ENCODE measurements at regions of chr7 and their contacts with region 1.

Region 1: DNA sequence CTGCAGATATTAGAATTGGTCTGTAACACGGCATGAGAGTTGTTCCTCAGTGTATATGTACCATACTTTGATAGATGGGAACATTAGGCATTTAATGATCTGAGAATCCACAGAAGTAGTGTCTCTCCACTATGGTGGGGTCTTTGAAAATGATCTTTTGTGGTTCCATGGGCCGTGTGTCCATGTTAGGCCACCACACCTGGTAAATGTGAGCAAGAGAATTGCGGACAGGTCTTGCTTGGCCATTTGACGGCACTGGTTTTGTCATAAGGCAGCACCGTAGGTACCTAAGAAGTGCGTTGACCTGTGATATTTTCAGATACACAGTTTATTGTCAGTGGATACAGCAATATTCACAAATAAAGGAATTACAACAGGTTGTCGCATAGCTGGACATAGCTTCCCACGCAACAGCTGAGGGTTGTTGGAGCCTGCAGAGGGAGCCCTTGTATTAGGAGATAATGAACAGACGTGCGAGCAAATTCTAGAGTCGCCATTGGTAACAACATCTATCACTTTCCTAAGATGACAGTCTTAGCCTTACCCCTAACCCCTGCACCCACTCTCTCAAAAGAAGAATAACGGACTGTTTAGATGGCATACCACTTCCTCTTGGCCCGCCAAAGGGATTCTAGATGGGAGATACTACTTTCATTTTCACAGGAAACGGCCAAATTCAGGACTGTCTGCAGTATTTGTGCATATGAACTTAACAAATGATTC is 111.4 kb downstream of the COL28A1 start:
- DNase-seq: peak; percentile 74
- ATAC-seq: peak; percentile 97
- H3K4me3 ChIP-seq: peak overlapping the region; percentile 36 to 66
- H3K27ac ChIP-seq: no peak overlapping the region
- H3K4me1 ChIP-seq: no peaks in the 10 kb centered on the region
- H3K27me3 ChIP-seq: peaks cover 9% of the 10 kb centered on the region
- CTCF ChIP-seq: peak; percentile 93

Region 2: DNA sequence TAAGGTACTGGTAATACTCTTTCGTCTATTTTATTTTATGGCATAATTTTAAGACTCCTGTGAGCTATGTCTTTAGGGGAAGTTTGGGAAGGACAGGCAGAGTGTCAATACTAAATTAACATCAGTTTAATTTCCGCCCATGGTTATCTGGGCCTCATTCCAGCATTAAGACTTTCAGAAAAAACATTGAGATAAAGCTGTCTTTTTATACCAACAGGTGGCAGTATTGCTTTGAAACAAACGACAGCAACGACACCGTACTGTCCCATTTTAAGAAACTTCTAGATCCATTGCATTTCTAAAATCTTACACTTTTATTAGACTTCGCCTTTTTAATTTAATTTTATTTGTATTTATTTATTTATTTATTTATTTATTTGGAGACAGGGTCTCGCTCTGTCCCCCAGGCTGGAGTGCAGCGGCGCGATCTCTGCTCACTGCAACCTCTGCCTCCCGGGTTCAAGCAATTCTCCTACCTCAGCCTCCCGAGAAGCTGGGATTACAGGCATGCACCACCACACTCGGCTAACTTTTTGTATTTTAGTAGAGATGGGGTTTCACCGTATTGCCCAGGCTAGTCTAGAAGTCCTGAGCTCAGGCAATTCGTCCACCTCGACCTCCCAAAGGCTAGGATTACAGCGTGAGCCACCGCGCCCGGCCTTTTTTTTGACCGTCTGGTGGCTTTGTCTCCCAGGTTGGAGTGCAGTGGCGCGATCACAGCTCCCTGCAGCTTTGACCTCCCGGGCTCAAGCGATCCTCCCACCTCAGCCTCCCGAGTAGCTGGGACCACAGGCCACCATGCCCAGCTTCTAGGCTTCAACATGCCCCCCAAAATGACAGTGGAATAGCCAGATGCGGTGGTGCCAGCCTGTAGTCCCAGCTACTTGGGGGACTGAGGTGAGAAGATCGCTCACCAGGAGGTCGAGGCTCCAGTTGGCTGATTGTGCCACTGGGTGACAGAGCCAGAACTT is 320.7 kb before region 1 on chr7:
- CTCF ChIA-PET with region 1: interaction called, 3 read pairs
- POLR2A ChIA-PET with region 1: no interaction called
- in situ Hi-C with region 1: no loop called
- intact Hi-C with region 1: loop called (anchors 5 kb)
- DNase-seq: peak; percentile 50
- ATAC-seq: peak; percentile 84
- H3K4me3 ChIP-seq: peak overlapping the region in 1 of 2 experiments; percentile 44; a peak in 2 of 4 replicates
- H3K27ac ChIP-seq: no peak overlapping the region; the same call in 1 of the 2 replicates
- H3K4me1 ChIP-seq: peaks cover 5% of the 10 kb centered on the region
- H3K27me3 ChIP-seq: 0 out of 2 replicates have a peak, but pooled peaks cover 3% of the 10 kb centered on the region
- CTCF ChIP-seq: peak; percentile 77

Region 3: DNA sequence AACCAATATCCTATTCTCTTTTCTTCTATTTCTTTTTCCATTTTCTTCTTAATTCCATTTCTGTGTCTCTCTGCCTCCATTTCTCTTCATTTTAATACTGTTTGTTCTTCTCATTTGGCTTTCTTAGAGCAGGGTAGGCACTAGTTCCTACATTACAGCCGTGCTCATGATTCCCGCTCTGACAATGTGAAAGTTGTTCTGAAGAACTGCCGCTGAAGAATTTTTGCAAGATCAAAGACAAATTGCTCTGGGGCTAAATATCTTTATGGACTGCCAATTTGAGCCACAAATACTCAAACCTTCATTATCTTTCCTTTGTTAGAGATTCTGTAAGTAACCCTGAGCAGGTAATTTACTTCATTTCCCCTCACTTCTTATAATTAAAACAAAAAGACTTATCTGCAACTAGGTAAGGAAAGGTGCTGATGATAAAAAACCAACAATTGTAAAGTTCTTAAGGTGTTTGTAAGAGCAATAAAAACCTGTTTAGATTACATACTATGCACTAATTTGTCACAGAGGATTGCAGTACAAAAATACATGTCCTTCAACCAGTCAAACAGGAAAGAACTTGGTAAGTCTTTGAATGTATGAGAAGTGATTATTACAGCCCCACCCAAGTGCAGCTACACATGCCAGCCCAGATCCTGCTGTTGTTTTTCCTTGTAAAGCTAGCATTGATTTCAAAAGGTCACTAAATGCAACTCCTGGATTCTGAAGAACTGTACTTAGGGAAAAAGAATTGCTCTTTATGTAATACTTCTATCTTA is 16.1 kb before region 1 on chr7:
- CTCF ChIA-PET with region 1: no interaction called
- POLR2A ChIA-PET with region 1: no interaction called
- in situ Hi-C with region 1: no loop called
- intact Hi-C with region 1: no loop called
- DNase-seq: no peak
- ATAC-seq: no peak
- H3K4me3 ChIP-seq: no peak overlapping the region
- H3K27ac ChIP-seq: no peak overlapping the region
- H3K4me1 ChIP-seq: no peaks in the 10 kb centered on the region
- H3K27me3 ChIP-seq: no peaks in the 10 kb centered on the region; the same call in 1 of the 2 replicates
- CTCF ChIP-seq: no peak

Region 4: DNA sequence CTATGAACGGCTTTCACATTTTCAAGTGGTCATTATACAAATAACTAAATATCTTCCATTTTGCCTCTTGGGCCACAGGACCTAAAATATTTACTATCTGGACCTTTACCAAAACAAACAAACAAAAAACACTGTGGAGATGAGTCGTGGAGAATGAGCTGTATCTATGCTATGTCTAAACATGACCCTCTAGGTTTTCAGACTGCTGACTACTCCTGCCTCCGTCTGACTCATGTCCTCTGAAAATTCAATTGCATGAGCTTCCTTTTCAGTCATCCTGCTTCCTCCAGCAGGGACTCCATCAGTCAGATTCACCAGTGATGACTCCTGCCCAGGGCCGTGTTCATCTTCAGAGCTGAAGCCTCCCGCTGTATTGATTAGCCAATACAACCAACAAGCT is 14.5 kb after region 1 on chr7:
- CTCF ChIA-PET with region 1: no interaction called
- POLR2A ChIA-PET with region 1: no interaction called
- in situ Hi-C with region 1: no loop called
- intact Hi-C with region 1: no loop called
- DNase-seq: peak; percentile 95
- ATAC-seq: peak; percentile 89
- H3K4me3 ChIP-seq: no peak overlapping the region
- H3K27ac ChIP-seq: no peak overlapping the region
- H3K4me1 ChIP-seq: no peaks in the 10 kb centered on the region
- H3K27me3 ChIP-seq: no peaks in the 10 kb centered on the region
- CTCF ChIP-seq: no peak

Region 5: GRCh38 chr7:7474431-7474830 is 50.1 kb after region 1 on chr7:
- CTCF ChIA-PET with region 1: no interaction called
- POLR2A ChIA-PET with region 1: no interaction called
- in situ Hi-C with region 1: no loop called
- intact Hi-C with region 1: no loop called
- DNase-seq: no peak
- ATAC-seq: no peak
- H3K4me3 ChIP-seq: no peak overlapping the region
- H3K27ac ChIP-seq: no peak overlapping the region
- H3K4me1 ChIP-seq: no peaks in the 10 kb centered on the region
- H3K27me3 ChIP-seq: no peaks in the 10 kb centered on the region; the same call in 1 of the 2 replicates
- CTCF ChIP-seq: no peak

Region 6: DNA sequence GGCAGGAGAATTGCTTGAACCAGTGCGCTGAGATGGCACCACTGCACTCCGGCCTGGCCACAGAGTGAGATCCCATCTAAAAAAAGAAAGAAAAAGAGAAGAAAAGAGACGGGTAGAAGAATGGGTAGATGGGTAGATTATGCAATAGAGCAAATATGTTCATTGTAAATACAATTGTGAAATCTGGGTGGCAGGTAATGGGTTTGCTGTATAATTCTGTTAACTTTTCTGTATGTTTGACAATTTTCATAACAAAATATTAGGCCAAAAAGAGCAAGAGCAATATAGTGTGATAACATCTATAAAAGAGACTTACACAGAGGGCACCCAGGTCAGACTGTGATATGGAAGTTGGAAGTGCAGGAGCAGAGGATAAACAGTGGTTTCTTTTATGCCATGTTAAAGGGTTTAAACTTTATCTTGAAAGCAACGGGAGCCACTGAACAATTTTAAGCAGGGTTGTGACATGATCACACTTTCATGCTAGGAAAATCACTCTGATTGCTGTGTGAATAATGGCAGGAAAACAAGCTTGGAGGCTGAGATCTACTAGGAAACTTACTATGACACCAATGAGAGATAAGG is 118.0 kb after region 1 on chr7:
- CTCF ChIA-PET with region 1: interaction called, 7 read pairs
- POLR2A ChIA-PET with region 1: no interaction called
- in situ Hi-C with region 1: no loop called
- intact Hi-C with region 1: loop called (anchors 1 kb)
- DNase-seq: no peak
- ATAC-seq: 0 out of 2 replicates have a peak, but pooled peaks have one; percentile 38
- H3K4me3 ChIP-seq: no peak overlapping the region
- H3K27ac ChIP-seq: no peak overlapping the region
- H3K4me1 ChIP-seq: no peaks in the 10 kb centered on the region
- H3K27me3 ChIP-seq: peaks cover 10% of the 10 kb centered on the region
- CTCF ChIP-seq: no peak

Region 7: GRCh38 chr7:7681179-7681935 is 257.0 kb after region 1 on chr7:
- CTCF ChIA-PET with region 1: interaction called, 10 read pairs
- POLR2A ChIA-PET with region 1: no interaction called
- in situ Hi-C with region 1: no loop called
- intact Hi-C with region 1: no loop called
- DNase-seq: peak; percentile 85
- ATAC-seq: peak; percentile 95
- H3K4me3 ChIP-seq: no peak overlapping the region
- H3K27ac ChIP-seq: peak overlapping the region; percentile 39; the same call in 1 of the 2 replicates
- H3K4me1 ChIP-seq: peaks cover 14% of the 10 kb centered on the region
- H3K27me3 ChIP-seq: no peaks in the 10 kb centered on the region
- CTCF ChIP-seq: peak; percentile 75; the same call in 1 of the 2 replicates

Region 8: DNA sequence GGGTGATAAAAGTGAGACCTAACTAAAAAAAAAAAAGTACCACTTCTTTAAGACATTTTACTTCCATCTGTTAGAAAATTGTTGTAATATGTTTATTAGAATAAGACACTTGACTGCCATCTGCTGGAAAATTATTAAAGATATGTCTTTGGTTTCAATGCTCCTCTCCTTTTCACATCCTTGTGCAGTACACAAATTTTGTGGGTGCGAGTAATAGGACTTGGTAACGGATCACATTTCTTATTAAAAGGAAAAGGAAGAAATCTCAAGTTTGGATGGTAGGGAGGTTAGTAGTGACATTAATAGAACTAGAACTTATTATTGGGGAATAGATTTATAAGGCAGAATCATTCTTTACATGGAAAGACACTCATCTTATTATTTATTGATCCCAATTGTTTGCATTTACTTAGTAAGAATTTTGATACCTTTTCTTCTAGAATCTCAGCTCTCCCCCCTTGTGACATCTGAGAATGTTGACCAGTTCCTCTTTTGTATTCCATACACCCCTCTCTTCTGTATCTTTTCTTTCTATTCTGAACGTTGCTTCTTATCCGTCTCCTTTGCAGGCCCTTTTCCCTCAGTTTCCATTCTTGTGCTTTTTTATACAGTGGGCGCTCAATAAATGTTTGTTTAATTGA is 337.1 kb after region 1 on chr7:
- CTCF ChIA-PET with region 1: no interaction called
- POLR2A ChIA-PET with region 1: no interaction called
- in situ Hi-C with region 1: no loop called
- intact Hi-C with region 1: loop called (anchors 10 kb)
- DNase-seq: peak; percentile 58
- ATAC-seq: peak; percentile 73
- H3K4me3 ChIP-seq: peak overlapping the region in 1 of 2 experiments; percentile 59; a peak in 2 of 4 replicates
- H3K27ac ChIP-seq: no peak overlapping the region
- H3K4me1 ChIP-seq: peaks cover 8% of the 10 kb centered on the region; the same call in 1 of the 2 replicates
- H3K27me3 ChIP-seq: no peaks in the 10 kb centered on the region
- CTCF ChIP-seq: peak; percentile 59; the same call in 1 of the 2 replicates

Region 9: GRCh38 chr7:7834761-7835160 is 410.4 kb after region 1 on chr7:
- CTCF ChIA-PET with region 1: no interaction called
- POLR2A ChIA-PET with region 1: no interaction called
- in situ Hi-C with region 1: no loop called
- intact Hi-C with region 1: no loop called
- DNase-seq: no peak
- ATAC-seq: no peak
- H3K4me3 ChIP-seq: no peak overlapping the region
- H3K27ac ChIP-seq: no peak overlapping the region
- H3K4me1 ChIP-seq: no peaks in the 10 kb centered on the region
- H3K27me3 ChIP-seq: no peaks in the 10 kb centered on the region
- CTCF ChIP-seq: no peak

Region 10: GRCh38 chr7:8295638-8296361 is 871.5 kb after region 1 on chr7:
- CTCF ChIA-PET with region 1: no interaction called
- POLR2A ChIA-PET with region 1: no interaction called
- in situ Hi-C with region 1: no loop called
- intact Hi-C with region 1: loop called (anchors 10 kb)
- DNase-seq: peak; percentile 81
- ATAC-seq: peak; percentile 99
- H3K4me3 ChIP-seq: no peak overlapping the region
- H3K27ac ChIP-seq: no peak overlapping the region
- H3K4me1 ChIP-seq: no peaks in the 10 kb centered on the region
- H3K27me3 ChIP-seq: peaks cover 7% of the 10 kb centered on the region; the same call in 1 of the 2 replicates
- CTCF ChIP-seq: peak; percentile 82